Activated naive CD4-positive, alpha-beta T cell treated with anti-CD3 and anti-CD28 coated beads for 36 hours (primary cell): ENCODE measurements at regions of chr17 and their contacts with region 1.

Region 1: DNA sequence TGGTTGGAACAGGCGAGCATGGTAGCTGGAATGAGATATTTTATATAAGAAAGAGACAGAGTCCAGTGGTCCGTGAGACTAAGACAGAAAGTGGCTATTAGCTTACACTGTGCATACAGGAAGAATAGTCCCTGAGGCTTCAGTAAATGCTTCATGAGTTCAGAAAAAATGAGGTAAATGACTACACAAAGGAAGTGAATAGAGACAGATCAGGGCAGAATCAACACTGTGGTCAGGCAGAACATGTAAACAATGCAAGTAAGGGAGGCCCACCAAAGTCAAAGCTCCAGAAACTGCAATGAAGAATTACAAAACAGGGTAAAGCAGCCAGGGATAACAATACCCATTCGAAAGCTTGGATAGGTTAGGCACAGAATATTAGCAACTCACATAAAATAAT is 4.8 kb downstream of the ABCA10 start:
- DNase-seq: no peak
- H3K4me3 Mint-ChIP-seq: no peak overlapping the region
- H3K27ac Mint-ChIP-seq: no peak overlapping the region
- H3K4me1 Mint-ChIP-seq: peaks cover 4% of the 10 kb centered on the region
- H3K27me3 Mint-ChIP-seq: no peaks in the 10 kb centered on the region

Region 2: GRCh38 chr17:69060822-69061221 is 163.0 kb before region 1 on chr17 and contains the start of gene ABCA9:
- CTCF ChIA-PET with region 1: no interaction called
- intact Hi-C with region 1: loop called (anchors 10 kb)
- DNase-seq: no peak
- H3K4me3 Mint-ChIP-seq: no peak within 1 kb of the TSS
- H3K27ac Mint-ChIP-seq: no peak within 1 kb of the TSS
- H3K4me1 Mint-ChIP-seq: no peaks in the 10 kb centered on the region
- H3K27me3 Mint-ChIP-seq: peaks cover 5% of the 10 kb centered on the region
- total RNA-seq, gene ABCA9: not detected